ENCODE measurements at regions of chr5 and their contacts with region 1.

Region 1: GRCh38 chr5:151164686-151165392 is 7.3 kb upstream of the ANXA6 start:
- DNase-seq: peak; percentile 65
- H3K4me3 Mint-ChIP-seq: no peak overlapping the region
- H3K27ac Mint-ChIP-seq: no peak overlapping the region
- H3K4me1 Mint-ChIP-seq: peaks cover 14% of the 10 kb centered on the region
- H3K27me3 Mint-ChIP-seq: peaks cover 4% of the 10 kb centered on the region

Region 2: DNA sequence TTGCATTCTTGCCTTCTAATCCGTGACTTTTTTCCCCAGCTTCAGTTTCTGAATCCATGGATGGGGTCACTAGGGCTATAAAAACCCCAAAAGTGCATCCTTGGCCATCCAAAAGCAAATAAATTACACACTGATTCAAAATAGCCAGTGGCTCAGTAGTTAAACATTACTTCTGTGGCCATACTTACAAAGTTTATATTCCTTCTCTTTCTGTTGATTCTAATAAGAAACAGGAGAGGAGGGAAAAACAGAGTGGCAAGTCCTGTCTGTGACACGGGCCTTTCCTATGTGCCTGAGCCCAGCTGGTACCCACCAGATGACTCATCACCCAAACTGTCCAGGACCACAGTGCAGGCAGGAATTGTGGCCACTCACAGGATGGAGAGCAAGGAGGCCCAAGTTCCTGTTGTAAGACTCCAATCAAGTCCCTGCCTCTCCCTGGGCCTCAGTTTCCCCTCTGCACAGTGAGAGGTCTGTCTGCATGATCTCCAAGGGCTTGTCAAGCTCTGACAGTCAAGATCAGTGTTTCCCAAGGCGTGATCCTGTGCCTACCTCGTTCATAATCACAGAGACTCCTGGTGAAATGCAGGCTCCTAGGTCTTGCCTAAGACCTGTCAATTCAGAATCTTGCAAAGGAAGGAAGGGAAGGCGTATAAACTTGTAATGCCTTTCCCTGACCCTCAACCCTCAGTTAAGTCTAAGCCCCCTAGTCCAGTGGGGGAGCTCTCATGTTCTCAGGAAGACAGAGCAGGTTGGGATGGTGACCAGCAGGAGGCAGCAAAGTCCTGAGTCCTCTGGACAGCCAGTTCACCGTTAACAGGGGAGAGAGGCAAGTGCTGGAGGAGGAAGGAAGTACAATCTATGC is 113.5 kb before region 1 on chr5:
- intact Hi-C with region 1: loop called (anchors 1 kb)
- DNase-seq: peak; percentile 40
- H3K4me3 Mint-ChIP-seq: no peak overlapping the region
- H3K27ac Mint-ChIP-seq: peak overlapping the region; percentile 44
- H3K4me1 Mint-ChIP-seq: peaks cover 34% of the 10 kb centered on the region
- H3K27me3 Mint-ChIP-seq: no peaks in the 10 kb centered on the region

Region 3: GRCh38 chr5:151141535-151141934 is 23.3 kb before region 1 on chr5:
- intact Hi-C with region 1: loop called (anchors 1 kb)
- DNase-seq: peak; percentile 64
- H3K4me3 Mint-ChIP-seq: peak overlapping the region; percentile 80
- H3K27ac Mint-ChIP-seq: peak overlapping the region; percentile 73
- H3K4me1 Mint-ChIP-seq: peaks cover 88% of the 10 kb centered on the region
- H3K27me3 Mint-ChIP-seq: no peaks in the 10 kb centered on the region

Region 4: GRCh38 chr5:151239237-151239861 is 74.5 kb after region 1 on chr5:
- intact Hi-C with region 1: loop called (anchors 1 kb)
- DNase-seq: no peak
- H3K4me3 Mint-ChIP-seq: no peak overlapping the region
- H3K27ac Mint-ChIP-seq: no peak overlapping the region
- H3K4me1 Mint-ChIP-seq: peaks cover 41% of the 10 kb centered on the region
- H3K27me3 Mint-ChIP-seq: no peaks in the 10 kb centered on the region

Measured in activated T-helper 1 cell treated with anti-CD3 and anti-CD28 coated beads, Interleukin-12 subunit alpha, Interleukin-12 subunit beta, Interleukin-2, Interleukin-4 antibody, amounts not matched to agents 30 ng/mL and 10 ng/mL and 1 ng/mL, durations not matched to agents 14 hours and 24 hours and 36 hours (primary cell).